ENCODE measurements at regions of chr15 and their contacts with region 1.

Region 1: GRCh38 chr15:87850916-87851315 is 405.6 kb downstream of the NTRK3 start:
- DNase-seq: peak in 4 of 5 donors; percentile 23 to 77 (median 49)
- ATAC-seq: peak; percentile 89 to 93 (median 91)
- H3K4me3 ChIP-seq: no peak overlapping the region
- H3K27ac ChIP-seq: peak overlapping the region in 9 of 12 donors; percentile 8 to 77 (median 30)
- H3K4me1 ChIP-seq: peaks cover 0 to 11% (median 0%) of the 10 kb centered on the region in 12 donors
- H3K27me3 ChIP-seq: no peaks in the 10 kb centered on the region
- CTCF ChIP-seq: no peak
- POLR2A ChIP-seq: no peak

Region 2: GRCh38 chr15:87570206-87570605 is 280.7 kb before region 1 on chr15:
- intact Hi-C with region 1: no loop called
- DNase-seq: no peak
- ATAC-seq: no peak
- H3K4me3 ChIP-seq: peak overlapping the region in 2 of 12 donors; percentile 11 to 22
- H3K27ac ChIP-seq: no peak overlapping the region
- H3K4me1 ChIP-seq: peaks cover 0 to 6% (median 0%) of the 10 kb centered on the region in 12 donors
- H3K27me3 ChIP-seq: no peaks in the 10 kb centered on the region
- CTCF ChIP-seq: no peak
- POLR2A ChIP-seq: no peak

Region 3: DNA sequence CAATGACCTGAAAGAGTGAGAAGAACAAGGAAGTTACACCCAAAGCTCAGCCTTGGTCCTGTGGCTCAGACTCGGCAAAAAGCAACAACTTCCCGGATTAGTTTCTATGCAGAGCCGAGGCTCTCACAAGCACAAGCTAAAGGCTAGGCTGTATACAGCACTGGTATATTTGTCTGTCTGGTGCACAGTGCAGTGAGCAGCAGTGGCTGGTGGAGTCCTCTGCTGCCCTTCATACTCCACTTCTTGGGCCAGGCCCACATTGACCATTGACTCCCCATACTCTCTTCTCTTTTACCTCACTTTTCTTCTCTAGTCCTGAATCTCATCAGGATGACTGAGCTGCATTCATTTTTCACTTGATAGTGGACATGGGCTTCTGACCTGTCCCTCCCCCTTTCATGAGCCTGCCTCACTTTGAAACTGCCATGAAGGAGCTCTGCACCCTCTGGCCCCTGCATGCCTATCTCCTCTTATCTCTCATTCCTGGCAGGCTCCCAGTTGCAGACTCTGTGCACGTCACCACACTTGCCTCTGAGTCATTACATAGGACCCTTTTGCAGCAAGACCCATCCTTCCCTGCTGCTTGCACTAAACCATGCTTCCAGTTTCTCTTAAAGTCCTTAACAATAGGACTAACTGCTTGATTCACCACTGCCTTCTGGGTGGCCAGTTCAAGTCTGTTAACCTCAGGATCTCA is 26.3 kb after region 1 on chr15:
- intact Hi-C with region 1: loop called in 1 of 10 experiments (anchors 2 kb)
- DNase-seq: peak in 4 of 5 donors; percentile 31 to 73 (median 42)
- ATAC-seq: peak; percentile 64 to 95 (median 88)
- H3K4me3 ChIP-seq: no peak overlapping the region
- H3K27ac ChIP-seq: no peak overlapping the region
- H3K4me1 ChIP-seq: peaks cover 0 to 17% (median 0%) of the 10 kb centered on the region in 12 donors
- H3K27me3 ChIP-seq: no peaks in the 10 kb centered on the region
- CTCF ChIP-seq: no peak
- POLR2A ChIP-seq: no peak

Region 4: GRCh38 chr15:88018856-88019641 is 168.1 kb after region 1 on chr15:
- intact Hi-C with region 1: loop called in 1 of 10 experiments (anchors 1 kb)
- DNase-seq: no peak
- ATAC-seq: no peak
- H3K4me3 ChIP-seq: no peak overlapping the region
- H3K27ac ChIP-seq: no peak overlapping the region
- H3K4me1 ChIP-seq: no peaks in the 10 kb centered on the region
- H3K27me3 ChIP-seq: no peaks in the 10 kb centered on the region
- CTCF ChIP-seq: no peak
- POLR2A ChIP-seq: no peak